AG04450 (cell line): ENCODE measurements at regions of chr2 and their contacts with region 1.

Region 1: DNA sequence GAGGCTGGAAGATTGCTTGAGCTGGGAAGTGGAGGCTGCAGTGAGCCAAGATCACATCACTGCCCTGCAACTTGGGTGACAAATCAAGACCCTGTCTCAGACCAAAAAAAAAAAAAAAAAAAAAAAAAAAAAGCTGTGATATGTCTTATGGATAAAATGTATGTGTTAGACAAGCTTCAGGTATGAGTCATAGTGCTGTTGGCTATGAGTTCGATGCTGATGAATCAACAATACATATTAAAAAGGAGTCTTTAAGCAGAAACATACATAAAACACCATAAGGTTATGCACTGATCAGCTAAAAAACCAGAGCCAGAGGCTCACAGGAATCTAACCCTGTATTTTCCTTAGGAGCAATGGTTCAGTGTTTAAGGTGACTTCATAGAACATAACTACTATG is 332.3 kb downstream of the NCKAP5 start:
- DNase-seq: peak; percentile 24
- H3K4me3 ChIP-seq: no peak overlapping the region
- H3K27ac ChIP-seq: no peak overlapping the region
- H3K27me3 ChIP-seq: no peaks in the 10 kb centered on the region
- CTCF ChIP-seq: no peak

Region 2: GRCh38 chr2:133146895-133147294 is 89.1 kb before region 1 on chr2:
- CTCF ChIA-PET with region 1: no interaction called
- POLR2A ChIA-PET with region 1: no interaction called
- DNase-seq: no peak
- H3K4me3 ChIP-seq: no peak overlapping the region
- H3K27ac ChIP-seq: no peak overlapping the region
- H3K27me3 ChIP-seq: no peaks in the 10 kb centered on the region
- CTCF ChIP-seq: 0 out of 2 replicates have a peak, but pooled peaks have one; percentile 4

Region 3: GRCh38 chr2:133271133-133271532 is 35.2 kb after region 1 on chr2:
- CTCF ChIA-PET with region 1: no interaction called
- POLR2A ChIA-PET with region 1: no interaction called
- DNase-seq: no peak
- H3K4me3 ChIP-seq: no peak overlapping the region
- H3K27ac ChIP-seq: no peak overlapping the region
- H3K27me3 ChIP-seq: no peaks in the 10 kb centered on the region
- CTCF ChIP-seq: no peak

Region 4: GRCh38 chr2:133458280-133458679 is 222.3 kb after region 1 on chr2:
- CTCF ChIA-PET with region 1: no interaction called
- POLR2A ChIA-PET with region 1: no interaction called
- DNase-seq: no peak
- H3K4me3 ChIP-seq: no peak overlapping the region
- H3K27ac ChIP-seq: no peak overlapping the region
- H3K27me3 ChIP-seq: no peaks in the 10 kb centered on the region
- CTCF ChIP-seq: no peak

Region 5: GRCh38 chr2:133541376-133541775 is 305.4 kb after region 1 on chr2:
- CTCF ChIA-PET with region 1: no interaction called
- POLR2A ChIA-PET with region 1: no interaction called
- DNase-seq: no peak
- H3K4me3 ChIP-seq: no peak overlapping the region
- H3K27ac ChIP-seq: no peak overlapping the region
- H3K27me3 ChIP-seq: no peaks in the 10 kb centered on the region
- CTCF ChIP-seq: no peak

Region 6: GRCh38 chr2:133579274-133579673 is 343.3 kb after region 1 on chr2:
- CTCF ChIA-PET with region 1: no interaction called
- POLR2A ChIA-PET with region 1: interaction called, 12 read pairs
- DNase-seq: peak; percentile 27
- H3K4me3 ChIP-seq: no peak overlapping the region
- H3K27ac ChIP-seq: no peak overlapping the region
- H3K27me3 ChIP-seq: no peaks in the 10 kb centered on the region
- CTCF ChIP-seq: no peak

Region 7: GRCh38 chr2:133821107-133821760 is 585.3 kb after region 1 on chr2:
- CTCF ChIA-PET with region 1: no interaction called
- POLR2A ChIA-PET with region 1: interaction called, 12 read pairs
- DNase-seq: no peak
- H3K4me3 ChIP-seq: no peak overlapping the region
- H3K27ac ChIP-seq: no peak overlapping the region
- H3K27me3 ChIP-seq: no peaks in the 10 kb centered on the region
- CTCF ChIP-seq: no peak